Activated CD8-positive, alpha-beta T cell treated with anti-CD3 and anti-CD28 coated beads, Interleukin-2, amount 10 ng/mL, durations not matched to agents 7 days and 5 days (primary cell): ENCODE measurements at regions of chr2 and their contacts with region 1.

Region 1: GRCh38 chr2:30711646-30712085 is 95.6 kb downstream of the CAPN13 start:
- DNase-seq: peak; percentile 94
- ATAC-seq: peak; percentile 80
- H3K4me3 Mint-ChIP-seq: no peak overlapping the region
- H3K27ac Mint-ChIP-seq: no peak overlapping the region
- H3K4me1 Mint-ChIP-seq: peaks cover 8% of the 10 kb centered on the region
- H3K27me3 Mint-ChIP-seq: no peaks in the 10 kb centered on the region

Region 2: DNA sequence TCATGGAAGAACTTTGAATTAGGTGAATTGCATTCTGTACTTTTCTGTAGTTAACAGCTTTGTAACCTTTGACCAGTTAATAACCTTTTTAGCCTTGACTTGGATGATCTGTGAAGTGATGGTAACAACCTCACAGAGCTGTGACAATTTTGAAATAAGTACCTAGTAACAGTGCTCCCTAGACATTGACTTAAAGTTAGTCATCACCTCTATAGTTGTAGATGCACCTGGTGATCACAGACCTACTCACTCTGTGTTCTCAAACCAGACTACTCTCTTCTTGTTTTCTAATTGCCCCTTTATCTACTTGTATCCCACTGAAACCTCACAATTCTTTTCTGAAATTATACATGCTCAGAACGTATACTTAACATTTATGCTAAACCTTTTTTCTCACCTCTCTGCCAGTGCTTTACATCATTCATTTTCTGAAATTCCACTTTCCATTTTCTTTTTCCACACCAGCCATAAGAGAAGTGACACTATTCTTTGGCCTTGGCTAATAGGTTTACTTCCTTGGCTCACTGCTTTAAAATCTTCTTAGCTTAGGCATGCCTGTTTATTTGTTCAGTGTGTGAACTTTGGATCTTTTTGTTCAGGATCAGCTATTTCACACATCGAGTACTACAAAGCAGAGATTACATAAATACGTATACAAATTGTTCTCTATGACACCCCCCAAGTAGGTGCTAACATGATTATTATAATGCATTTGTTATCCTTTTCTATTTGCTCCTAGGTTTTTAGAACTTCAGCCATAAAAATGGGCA is 555.6 kb before region 1 on chr2:
- CTCF ChIA-PET with region 1: interaction called, 118 read pairs
- POLR2A ChIA-PET with region 1: interaction called, 3 read pairs
- DNase-seq: no peak
- ATAC-seq: no peak
- H3K4me3 Mint-ChIP-seq: no peak overlapping the region
- H3K27ac Mint-ChIP-seq: no peak overlapping the region
- H3K4me1 Mint-ChIP-seq: peaks cover 8% of the 10 kb centered on the region
- H3K27me3 Mint-ChIP-seq: no peaks in the 10 kb centered on the region

Region 3: DNA sequence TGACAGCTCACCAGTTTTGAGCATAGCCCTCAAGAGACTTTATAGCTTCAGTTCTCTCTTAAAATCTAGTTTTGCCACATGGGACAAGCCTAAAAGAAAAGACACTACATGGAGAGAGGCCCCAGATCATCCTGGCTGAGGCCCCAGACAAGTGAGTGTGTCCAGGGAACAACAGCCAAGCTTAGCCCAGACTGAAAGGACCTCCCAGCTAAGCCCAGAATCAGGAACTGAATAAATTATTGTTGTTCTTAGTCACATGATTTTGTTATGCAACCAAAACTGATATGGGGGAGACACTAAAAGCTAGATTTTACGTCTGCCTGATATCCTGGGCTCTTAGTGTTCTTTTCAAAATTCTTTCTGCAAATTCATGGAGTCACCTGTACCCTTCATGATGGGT is 509.7 kb before region 1 on chr2:
- CTCF ChIA-PET with region 1: interaction called, 120 read pairs
- POLR2A ChIA-PET with region 1: no interaction called
- DNase-seq: no peak
- ATAC-seq: no peak
- H3K4me3 Mint-ChIP-seq: no peak overlapping the region
- H3K27ac Mint-ChIP-seq: no peak overlapping the region
- H3K4me1 Mint-ChIP-seq: no peaks in the 10 kb centered on the region
- H3K27me3 Mint-ChIP-seq: peaks cover 6% of the 10 kb centered on the region

Region 4: DNA sequence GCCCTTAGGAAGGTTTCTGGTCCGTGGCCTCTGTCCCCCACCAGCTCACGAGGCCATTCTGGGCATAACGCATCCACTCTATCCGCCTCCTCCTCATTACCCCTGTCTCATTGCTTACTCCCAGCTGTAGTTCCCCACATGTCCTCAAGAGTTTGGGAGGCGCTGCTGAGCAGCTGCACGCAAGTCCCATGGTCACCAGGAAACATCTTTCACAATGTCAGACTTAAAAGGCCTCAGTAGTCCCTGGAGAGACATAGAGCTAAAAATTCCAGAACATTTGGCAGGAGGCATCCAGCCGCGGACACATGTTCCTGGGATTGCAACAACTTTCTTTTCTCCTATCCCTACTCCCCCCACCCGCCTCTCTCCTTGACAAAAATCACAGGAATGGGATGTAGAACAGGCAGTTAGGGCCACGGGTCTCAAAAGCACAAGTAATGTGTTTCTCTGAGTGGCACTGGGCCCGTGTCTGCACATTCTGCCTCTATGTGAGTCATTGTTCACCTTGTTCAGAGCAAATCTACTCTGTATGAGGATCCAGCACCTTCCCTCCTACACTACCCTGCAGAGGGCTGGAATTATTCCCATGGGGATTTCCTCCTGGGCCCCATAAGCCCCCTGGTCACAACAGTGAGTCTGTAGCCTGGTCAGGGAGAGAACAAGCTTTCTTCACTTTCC is 472.2 kb before region 1 on chr2:
- CTCF ChIA-PET with region 1: interaction called, 46 read pairs
- POLR2A ChIA-PET with region 1: no interaction called
- DNase-seq: peak; percentile 82
- ATAC-seq: peak; percentile 42
- H3K4me3 Mint-ChIP-seq: peak overlapping the region; percentile 46
- H3K27ac Mint-ChIP-seq: peak overlapping the region; percentile 82
- H3K4me1 Mint-ChIP-seq: peaks cover 88% of the 10 kb centered on the region
- H3K27me3 Mint-ChIP-seq: no peaks in the 10 kb centered on the region

Region 5: GRCh38 chr2:30588994-30589393 is 122.7 kb before region 1 on chr2:
- CTCF ChIA-PET with region 1: no interaction called
- POLR2A ChIA-PET with region 1: no interaction called
- DNase-seq: no peak
- ATAC-seq: no peak
- H3K4me3 Mint-ChIP-seq: no peak overlapping the region
- H3K27ac Mint-ChIP-seq: no peak overlapping the region
- H3K4me1 Mint-ChIP-seq: no peaks in the 10 kb centered on the region
- H3K27me3 Mint-ChIP-seq: no peaks in the 10 kb centered on the region

Region 6: DNA sequence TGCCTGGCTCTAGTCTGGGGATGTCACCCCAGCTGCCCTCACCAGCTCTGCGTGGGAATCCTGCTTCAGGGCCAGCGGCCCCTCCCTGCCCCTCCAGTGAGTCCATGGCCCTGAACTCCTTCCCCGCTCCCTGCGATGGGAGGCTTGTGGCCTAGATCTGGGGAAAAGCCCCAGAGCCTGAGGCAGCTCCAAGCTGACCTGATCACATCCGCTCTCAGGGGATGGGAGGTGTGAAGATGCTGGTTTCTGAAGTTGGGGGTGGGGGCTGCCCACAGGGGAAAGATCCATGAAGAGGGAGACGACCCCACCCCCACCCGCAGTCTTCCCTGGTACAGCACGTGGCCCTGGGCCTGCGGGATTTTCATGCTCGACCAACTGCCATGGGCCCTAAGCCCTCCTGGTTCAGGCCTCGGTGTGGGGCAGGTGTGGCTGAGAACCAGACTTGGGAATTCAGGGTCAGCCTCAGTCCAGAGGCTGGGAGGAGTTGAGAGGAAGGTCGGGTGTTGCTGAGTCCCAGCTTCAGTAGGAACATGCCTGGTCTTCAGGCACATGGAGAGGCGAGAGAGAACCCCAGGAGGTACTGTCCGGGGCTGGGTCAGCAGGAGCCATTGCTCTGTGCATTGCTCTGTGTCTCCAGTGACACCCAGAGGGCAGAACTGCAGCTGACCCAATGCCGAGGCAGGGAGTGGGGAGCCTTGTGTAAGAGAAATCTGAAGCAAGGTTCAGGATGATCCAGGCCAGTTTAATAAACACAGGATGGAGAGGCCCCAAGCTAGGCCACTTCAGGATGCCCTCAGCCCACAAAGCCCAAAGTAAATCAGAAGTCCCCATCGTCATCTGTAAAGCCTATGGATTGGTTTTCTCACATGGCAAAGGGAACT is 19.5 kb before region 1 on chr2:
- CTCF ChIA-PET with region 1: interaction called, 45 read pairs
- POLR2A ChIA-PET with region 1: no interaction called
- DNase-seq: no peak
- ATAC-seq: no peak
- H3K4me3 Mint-ChIP-seq: no peak overlapping the region
- H3K27ac Mint-ChIP-seq: no peak overlapping the region
- H3K4me1 Mint-ChIP-seq: no peaks in the 10 kb centered on the region
- H3K27me3 Mint-ChIP-seq: peaks cover 2% of the 10 kb centered on the region

Region 7: GRCh38 chr2:31333527-31334183 is 622.0 kb after region 1 on chr2:
- CTCF ChIA-PET with region 1: interaction called, 57 read pairs
- POLR2A ChIA-PET with region 1: no interaction called
- DNase-seq: peak; percentile 84
- ATAC-seq: peak; percentile 91
- H3K4me3 Mint-ChIP-seq: no peak overlapping the region
- H3K27ac Mint-ChIP-seq: no peak overlapping the region
- H3K4me1 Mint-ChIP-seq: no peaks in the 10 kb centered on the region
- H3K27me3 Mint-ChIP-seq: no peaks in the 10 kb centered on the region